ENCODE measurements at regions of chr7 and their contacts with region 1.

Region 1: DNA sequence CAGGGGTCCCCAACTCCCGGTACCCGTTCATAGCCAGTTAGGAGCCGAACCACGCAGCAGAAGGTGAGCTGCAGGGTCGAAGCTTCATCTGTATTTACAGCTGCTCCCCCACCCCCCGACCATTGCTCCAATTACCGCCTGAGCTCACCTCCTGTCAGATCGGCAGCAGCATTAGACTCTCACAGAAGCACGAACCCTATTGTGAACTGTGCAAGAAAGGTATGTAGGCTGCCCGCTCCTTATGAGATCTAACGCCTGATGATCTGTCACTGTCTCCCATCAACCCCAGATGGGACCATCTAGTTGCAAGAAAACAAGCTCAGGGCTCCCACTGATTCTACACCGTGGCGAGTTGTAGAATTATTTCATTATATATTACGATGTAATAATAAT is 14.6 kb upstream of the AZGP1 start:
- DNase-seq: no peak
- ATAC-seq: peak in 2 of 3 donors; percentile 10 to 13
- H3K4me3 ChIP-seq: no peak overlapping the region
- H3K4me3 Mint-ChIP-seq: no peak overlapping the region
- H3K27ac ChIP-seq: no peak overlapping the region
- H3K27ac Mint-ChIP-seq: no peak overlapping the region
- H3K4me1 ChIP-seq: peaks cover 5% of the 10 kb centered on the region
- H3K4me1 Mint-ChIP-seq: no peaks in the 10 kb centered on the region
- H3K27me3 ChIP-seq: no peaks in the 10 kb centered on the region
- H3K27me3 Mint-ChIP-seq: peaks cover 0 to 10% of the 10 kb centered on the region in 2 donors
- CTCF ChIP-seq: no peak

Region 2: GRCh38 chr7:99364961-99365817 is 625.3 kb before region 1 on chr7:
- intact Hi-C with region 1: no loop called
- DNase-seq: peak; percentile 55 to 81
- ATAC-seq: peak; percentile 57 to 84 (median 83)
- H3K4me3 ChIP-seq: no peak overlapping the region
- H3K4me3 Mint-ChIP-seq: no peak overlapping the region
- H3K27ac ChIP-seq: no peak overlapping the region
- H3K27ac Mint-ChIP-seq: no peak overlapping the region
- H3K4me1 ChIP-seq: no peaks in the 10 kb centered on the region
- H3K4me1 Mint-ChIP-seq: peaks cover 0 to 4% of the 10 kb centered on the region in 2 donors
- H3K27me3 ChIP-seq: no peaks in the 10 kb centered on the region
- H3K27me3 Mint-ChIP-seq: no peaks in the 10 kb centered on the region
- CTCF ChIP-seq: peak; percentile 52

Region 3: GRCh38 chr7:99910976-99911375 is 79.5 kb before region 1 on chr7:
- intact Hi-C with region 1: loop called (anchors 1 kb)
- DNase-seq: no peak
- ATAC-seq: no peak
- H3K4me3 ChIP-seq: no peak overlapping the region
- H3K4me3 Mint-ChIP-seq: no peak overlapping the region
- H3K27ac ChIP-seq: no peak overlapping the region
- H3K27ac Mint-ChIP-seq: peak overlapping the region in 1 of 2 donors; percentile 4
- H3K4me1 ChIP-seq: no peaks in the 10 kb centered on the region
- H3K4me1 Mint-ChIP-seq: peaks cover 39 to 49% of the 10 kb centered on the region in 2 donors
- H3K27me3 ChIP-seq: no peaks in the 10 kb centered on the region
- H3K27me3 Mint-ChIP-seq: no peaks in the 10 kb centered on the region
- CTCF ChIP-seq: no peak

Region 4: DNA sequence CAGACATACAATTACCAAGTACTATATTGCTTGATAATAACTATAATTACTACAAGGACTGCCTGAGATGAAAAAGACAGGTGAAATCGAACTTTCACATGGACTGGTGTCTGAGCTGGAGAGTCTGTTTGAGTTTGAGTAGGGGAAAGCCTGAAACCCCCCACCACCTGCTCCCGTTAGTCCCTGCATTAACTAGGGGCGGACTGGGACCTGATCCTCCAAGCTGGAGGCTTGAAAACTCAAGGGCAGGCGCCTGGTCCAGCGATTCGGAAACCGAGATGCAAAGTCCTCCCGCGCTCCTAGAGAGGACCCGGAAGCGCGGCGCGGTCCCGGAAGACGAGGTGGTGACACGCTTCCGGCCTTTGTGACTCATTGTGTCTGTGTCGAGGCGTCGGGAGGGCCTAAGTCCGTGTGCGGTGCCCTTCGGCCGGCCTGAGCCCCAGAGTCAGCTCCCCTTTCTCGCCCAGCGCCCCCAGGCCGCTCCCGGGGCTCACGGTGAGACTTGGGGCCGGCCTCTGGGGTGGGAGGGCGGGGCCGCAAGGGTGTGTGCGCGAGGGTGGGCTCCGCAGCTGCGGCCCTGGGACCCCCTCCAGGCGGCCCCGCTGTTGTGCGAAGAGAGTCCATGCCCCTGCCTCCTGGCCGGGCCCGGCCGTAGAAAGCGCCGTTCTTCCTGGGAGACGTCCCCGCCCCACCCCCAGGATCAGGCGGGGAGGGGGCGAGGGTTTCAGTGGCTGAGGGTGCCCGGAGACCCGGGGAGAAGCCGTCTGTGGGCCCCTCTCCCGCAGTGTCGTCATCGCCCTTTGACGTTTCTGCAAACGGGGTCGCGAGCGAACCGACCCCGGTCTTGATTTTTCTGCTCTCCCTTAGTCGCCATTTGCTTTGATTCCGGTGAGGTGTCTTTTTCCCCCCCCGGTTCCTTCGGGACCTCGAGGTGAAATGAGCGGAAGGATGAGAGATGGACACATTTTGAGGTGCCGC is 25.1 kb after region 1 on chr7 and contains the start of gene ZKSCAN1:
- intact Hi-C with region 1: no loop called
- DNase-seq: peak; percentile 77 to 95
- ATAC-seq: peak; percentile 95 to 99 (median 99)
- H3K4me3 ChIP-seq: peak within 1 kb of the TSS; percentile 98
- H3K4me3 Mint-ChIP-seq: peak within 1 kb of the TSS; percentile 92
- H3K27ac ChIP-seq: peak within 1 kb of the TSS; percentile 93
- H3K27ac Mint-ChIP-seq: peak within 1 kb of the TSS; percentile 91 to 95
- H3K4me1 ChIP-seq: peaks cover 19% of the 10 kb centered on the region
- H3K4me1 Mint-ChIP-seq: peaks cover 24 to 27% of the 10 kb centered on the region in 2 donors
- H3K27me3 ChIP-seq: no peaks in the 10 kb centered on the region
- H3K27me3 Mint-ChIP-seq: peaks cover 5 to 6% of the 10 kb centered on the region in 2 donors
- CTCF ChIP-seq: no peak
- total RNA-seq, gene ZKSCAN1: 57.6 to 62.5 (median 60.8) TPM

Region 5: DNA sequence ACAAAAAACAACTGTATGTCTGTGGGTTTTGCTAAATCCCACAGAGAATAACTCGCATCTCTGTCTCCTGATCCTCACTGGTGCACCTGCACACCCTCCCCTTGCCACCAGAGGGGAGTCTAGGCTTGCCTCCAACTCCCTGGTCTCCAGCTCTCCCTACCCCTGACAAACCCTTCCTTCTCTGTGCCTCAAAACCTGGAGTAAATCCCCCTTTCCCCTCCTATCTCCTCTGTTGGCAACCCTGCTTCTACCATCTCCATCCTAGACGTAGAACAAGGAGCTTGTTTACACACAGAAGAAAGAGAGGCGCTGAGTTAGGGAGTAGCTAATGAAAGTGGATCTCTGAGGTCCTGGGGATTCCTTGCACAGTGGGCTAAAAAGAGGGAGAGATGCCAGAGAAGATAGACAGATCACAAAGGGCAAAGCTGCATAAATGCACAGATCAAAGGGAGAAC is 142.3 kb after region 1 on chr7:
- intact Hi-C with region 1: loop called (anchors 5 kb)
- DNase-seq: peak; percentile 44 to 84
- ATAC-seq: peak; percentile 81 to 84 (median 83)
- H3K4me3 ChIP-seq: no peak overlapping the region
- H3K4me3 Mint-ChIP-seq: no peak overlapping the region
- H3K27ac ChIP-seq: no peak overlapping the region
- H3K27ac Mint-ChIP-seq: no peak overlapping the region
- H3K4me1 ChIP-seq: peaks cover 12% of the 10 kb centered on the region
- H3K4me1 Mint-ChIP-seq: peaks cover 9 to 20% of the 10 kb centered on the region in 2 donors
- H3K27me3 ChIP-seq: no peaks in the 10 kb centered on the region
- H3K27me3 Mint-ChIP-seq: peaks cover 0 to 7% of the 10 kb centered on the region in 2 donors
- CTCF ChIP-seq: peak; percentile 79

Region 6: DNA sequence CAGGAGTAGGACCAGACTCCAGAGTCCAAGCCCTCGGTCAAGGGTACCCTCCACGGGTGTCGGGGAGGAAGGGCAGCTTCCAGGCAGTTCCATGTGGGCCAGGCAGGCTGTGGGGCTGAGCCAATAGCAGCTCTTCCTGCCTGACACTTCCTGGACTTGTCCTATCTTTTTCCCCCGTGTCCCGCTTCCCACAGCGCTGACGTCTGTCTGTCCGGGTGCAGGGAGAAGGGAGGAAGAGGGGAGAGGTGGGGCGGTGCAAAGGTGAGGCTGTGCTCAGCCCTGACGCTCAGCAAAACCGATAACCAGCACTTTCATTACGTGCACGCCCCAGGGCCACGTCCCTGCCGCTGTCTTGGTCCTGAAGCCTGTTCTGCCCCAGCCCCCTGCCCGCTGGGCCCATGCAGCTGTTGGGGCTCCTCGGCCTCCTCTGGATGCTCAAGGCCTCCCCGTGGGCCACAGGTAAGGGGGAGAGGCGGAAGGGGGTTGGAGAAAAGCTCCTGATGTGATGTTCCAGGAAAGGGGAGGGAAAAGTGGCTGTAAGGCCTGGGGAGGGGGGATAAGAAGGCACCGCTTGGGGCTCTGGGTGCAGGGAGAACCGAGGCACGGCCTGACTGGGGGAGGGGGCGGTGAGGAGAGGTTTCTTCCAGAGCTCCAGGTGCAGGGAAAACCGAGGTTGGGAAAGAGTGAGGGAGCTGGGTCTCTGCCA is 958.9 kb after region 1 on chr7 and contains the start of gene MUC3A:
- intact Hi-C with region 1: no loop called
- DNase-seq: no peak
- ATAC-seq: no peak
- H3K4me3 ChIP-seq: no peak within 1 kb of the TSS
- H3K4me3 Mint-ChIP-seq: no peak within 1 kb of the TSS
- H3K27ac ChIP-seq: no peak within 1 kb of the TSS
- H3K27ac Mint-ChIP-seq: no peak within 1 kb of the TSS
- H3K4me1 ChIP-seq: no peaks in the 10 kb centered on the region
- H3K4me1 Mint-ChIP-seq: no peaks in the 10 kb centered on the region
- H3K27me3 ChIP-seq: no peaks in the 10 kb centered on the region
- H3K27me3 Mint-ChIP-seq: peaks cover 19 to 21% of the 10 kb centered on the region in 2 donors
- CTCF ChIP-seq: no peak
- total RNA-seq, gene MUC3A: 0.24 TPM in 1 of 3 donors, not detected in the others

Measured in natural killer cell (primary cell).